Left colon (tissue), 2 donors: ENCODE measurements at regions of chr17 and their contacts with region 1.

Region 1: DNA sequence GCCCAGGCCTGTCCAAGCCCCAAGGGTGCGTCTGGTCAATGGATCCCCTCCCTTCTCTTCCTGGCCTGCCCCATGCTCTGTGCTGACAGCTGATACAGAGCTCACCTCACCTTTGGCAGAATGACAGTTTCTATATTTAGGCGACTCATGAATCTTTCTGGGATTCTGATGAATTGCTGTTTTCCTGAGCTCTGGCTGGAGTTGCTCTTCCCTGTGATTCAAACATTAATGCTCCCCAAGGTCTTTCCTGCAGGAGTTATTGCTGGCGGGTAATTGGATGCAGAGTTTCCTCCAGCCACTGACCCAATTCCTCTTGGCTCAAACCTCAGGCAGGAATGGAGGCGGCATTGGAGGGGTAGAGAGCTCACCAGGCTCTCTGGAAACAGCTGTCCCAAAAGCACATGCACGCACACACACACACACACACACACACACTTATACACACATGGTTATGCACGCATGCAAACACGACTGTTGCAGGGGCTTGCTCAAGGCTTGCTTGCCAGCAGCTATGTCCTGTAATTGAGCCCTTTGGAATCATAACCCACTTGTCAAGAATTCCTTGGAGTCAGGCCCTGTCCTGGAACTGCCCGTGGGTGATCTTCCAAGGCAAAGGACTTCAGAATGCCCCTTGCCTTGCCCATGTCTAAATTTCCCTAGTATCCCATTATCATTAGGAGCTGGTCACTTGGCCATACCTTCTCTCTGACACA is 128.8 kb downstream of the ASIC2 start:
- DNase-seq: no peak
- ATAC-seq: no peak

Region 2: GRCh38 chr17:31467502-31468256 is 1696.6 kb before region 1 on chr17:
- intact Hi-C with region 1: loop called in 1 of 2 experiments (anchors 10 kb)
- DNase-seq: no peak
- ATAC-seq: no peak